ENCODE measurements at regions of chr7 and their contacts with region 1.

Region 1: GRCh38 chr7:92969061-92969460 is 132.7 kb upstream of the CDK6 start:
- DNase-seq: no peak
- ATAC-seq: no peak
- H3K4me3 ChIP-seq: no peak overlapping the region
- H3K27ac ChIP-seq: no peak overlapping the region
- H3K4me1 ChIP-seq: no peaks in the 10 kb centered on the region
- H3K27me3 ChIP-seq: no peaks in the 10 kb centered on the region; a peak in 1 of 5 replicates
- CTCF ChIP-seq: no peak
- EP300 ChIP-seq: no peak
- POLR2A ChIP-seq: no peak
- RAD21 ChIP-seq: no peak

Region 2: DNA sequence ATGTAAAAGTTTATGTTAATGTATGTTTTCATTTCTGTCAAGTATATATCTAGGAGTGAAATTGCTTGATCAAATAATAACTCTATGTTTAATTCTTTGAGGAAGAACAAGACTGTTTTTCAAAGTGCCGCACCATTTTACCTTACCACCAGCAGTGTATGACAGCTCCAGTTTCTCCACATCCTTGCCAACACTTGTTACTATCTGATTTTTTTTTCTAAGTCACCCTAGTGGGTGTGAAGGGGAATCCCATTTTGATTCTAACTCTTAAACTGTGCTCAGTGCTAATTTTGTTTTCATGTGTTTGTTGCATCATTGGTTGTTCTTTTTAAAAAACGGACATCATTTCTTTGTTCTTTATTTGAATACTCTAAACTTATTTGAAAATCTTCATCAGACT is 12.5 kb before region 1 on chr7:
- CTCF ChIA-PET with region 1: no interaction called
- POLR2A ChIA-PET with region 1: no interaction called
- in situ Hi-C with region 1: no loop called
- intact Hi-C with region 1: loop called (anchors 1 kb)
- DNase-seq: no peak
- ATAC-seq: no peak
- H3K4me3 ChIP-seq: no peak overlapping the region
- H3K27ac ChIP-seq: no peak overlapping the region
- H3K4me1 ChIP-seq: no peaks in the 10 kb centered on the region
- H3K27me3 ChIP-seq: no peaks in the 10 kb centered on the region
- CTCF ChIP-seq: no peak
- EP300 ChIP-seq: no peak
- POLR2A ChIP-seq: no peak
- RAD21 ChIP-seq: no peak

Measured in HepG2 (cell line).